HepG2 (cell line): ENCODE measurements at regions of chr14 and their contacts with region 1.

Region 1: DNA sequence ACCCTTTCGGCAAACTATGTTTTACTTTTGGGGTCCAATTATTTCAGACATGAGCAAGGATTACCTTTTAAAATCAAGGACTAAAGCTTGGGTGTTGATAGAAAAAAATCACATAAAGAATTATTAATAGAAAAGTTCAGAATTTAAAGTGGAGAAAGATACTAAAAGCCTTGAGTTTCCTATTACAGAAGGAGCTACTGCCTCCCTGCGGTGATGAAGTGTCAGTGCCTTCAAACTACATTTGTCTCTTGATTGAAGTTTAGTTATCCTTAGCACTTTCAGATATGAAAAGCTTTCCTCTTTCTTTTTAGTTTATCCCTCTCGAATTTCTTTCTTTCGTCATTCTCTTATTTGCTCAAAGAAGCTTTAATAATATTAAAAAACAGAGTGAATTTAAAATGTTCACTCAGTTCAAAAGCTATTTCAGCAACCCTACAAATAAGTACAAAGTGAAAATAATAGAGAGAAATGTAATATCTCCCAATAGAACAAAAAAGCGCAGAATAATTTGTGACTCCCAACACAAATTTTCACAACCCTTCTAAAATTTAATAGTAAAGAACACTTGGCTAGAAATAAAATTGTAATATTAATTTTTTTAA is 87.6 kb downstream of the SEC23A start:
- DNase-seq: peak; percentile 84
- ATAC-seq: peak; percentile 41; the same call in 2 of the 3 replicates
- H3K4me3 ChIP-seq: no peak overlapping the region
- H3K27ac ChIP-seq: no peak overlapping the region
- H3K4me1 ChIP-seq: peaks cover 34% of the 10 kb centered on the region
- H3K27me3 ChIP-seq: no peaks in the 10 kb centered on the region
- CTCF ChIP-seq: peak; percentile 88
- EP300 ChIP-seq: no peak
- POLR2A ChIP-seq: no peak
- RAD21 ChIP-seq: peak; percentile 81

Region 2: GRCh38 chr14:37903343-37904191 is 1111.9 kb before region 1 on chr14:
- CTCF ChIA-PET with region 1: no interaction called
- POLR2A ChIA-PET with region 1: no interaction called
- in situ Hi-C with region 1: loop called (anchors 25 kb)
- intact Hi-C with region 1: loop called (anchors 5 kb)
- DNase-seq: peak; percentile 75
- ATAC-seq: peak; percentile 90
- H3K4me3 ChIP-seq: peak overlapping the region in 2 of 3 experiments; percentile 1 to 29; a peak in 2 of 6 replicates
- H3K27ac ChIP-seq: no peak overlapping the region
- H3K4me1 ChIP-seq: peaks cover 8% of the 10 kb centered on the region
- H3K27me3 ChIP-seq: no peaks in the 10 kb centered on the region
- CTCF ChIP-seq: peak; percentile 79
- EP300 ChIP-seq: no peak
- POLR2A ChIP-seq: no peak
- RAD21 ChIP-seq: peak; percentile 69

Region 3: DNA sequence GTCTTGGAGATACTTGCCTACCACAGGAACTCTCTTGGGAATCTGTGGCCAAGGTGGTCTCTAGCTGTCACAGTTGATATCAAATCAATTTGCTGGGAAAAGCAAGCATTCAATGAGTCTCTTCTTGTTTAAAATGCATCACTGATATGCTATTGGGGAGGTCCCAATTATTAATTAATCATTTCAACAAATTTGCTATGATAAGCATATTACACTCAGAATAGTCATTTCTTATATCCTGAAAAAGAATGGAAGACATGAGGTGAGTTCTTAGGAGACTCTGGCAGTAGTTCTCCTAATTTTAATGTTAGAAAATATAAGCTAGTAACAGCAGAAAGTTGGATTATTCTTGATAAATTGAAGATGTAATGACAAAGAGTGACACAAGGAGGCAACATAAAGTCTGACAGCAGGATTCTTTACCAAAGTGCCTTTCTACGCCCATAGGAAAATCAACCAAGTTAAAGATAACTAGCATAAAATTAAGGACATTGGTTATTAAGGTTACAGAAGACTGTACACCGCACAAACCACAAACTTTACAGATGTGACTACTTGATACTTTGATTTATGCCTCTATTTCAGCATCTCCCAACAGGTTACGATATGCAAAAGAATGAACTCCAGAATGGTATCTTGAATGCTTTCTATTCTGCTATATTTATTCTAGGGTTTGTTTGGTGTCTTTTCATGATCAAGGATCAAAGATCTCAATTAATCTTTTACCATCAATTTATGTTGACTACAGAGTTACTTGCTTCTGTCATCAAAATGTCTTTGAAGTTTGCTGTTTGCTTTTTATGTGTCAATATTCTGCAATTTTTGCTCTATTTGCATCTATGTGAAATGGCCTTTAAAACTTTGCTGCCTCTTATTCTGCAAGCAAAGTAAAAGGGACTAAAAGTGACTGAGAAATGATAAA is 410.0 kb before region 1 on chr14:
- CTCF ChIA-PET with region 1: no interaction called
- POLR2A ChIA-PET with region 1: no interaction called
- in situ Hi-C with region 1: no loop called
- intact Hi-C with region 1: loop called (anchors 1 kb)
- DNase-seq: peak; percentile 79
- ATAC-seq: peak; percentile 83
- H3K4me3 ChIP-seq: peak overlapping the region in 2 of 3 experiments; percentile 1 to 11; a peak in 2 of 6 replicates
- H3K27ac ChIP-seq: peak overlapping the region; percentile 14
- H3K4me1 ChIP-seq: peaks cover 24% of the 10 kb centered on the region
- H3K27me3 ChIP-seq: no peaks in the 10 kb centered on the region
- CTCF ChIP-seq: peak; percentile 56
- EP300 ChIP-seq: peak in 1 of 2 experiments; percentile 92; a peak in 2 of 4 replicates
- POLR2A ChIP-seq: no peak
- RAD21 ChIP-seq: peak; percentile 10; the same call in 1 of the 2 replicates

Region 4: GRCh38 chr14:38941485-38941884 is 74.0 kb before region 1 on chr14:
- CTCF ChIA-PET with region 1: interaction called, 13 read pairs
- POLR2A ChIA-PET with region 1: no interaction called
- in situ Hi-C with region 1: no loop called
- intact Hi-C with region 1: loop called (anchors 1 kb)
- DNase-seq: peak; percentile 38
- ATAC-seq: peak; percentile 79
- H3K4me3 ChIP-seq: no peak overlapping the region
- H3K27ac ChIP-seq: no peak overlapping the region
- H3K4me1 ChIP-seq: no peaks in the 10 kb centered on the region
- H3K27me3 ChIP-seq: no peaks in the 10 kb centered on the region
- CTCF ChIP-seq: peak; percentile 20; the same call in 1 of the 2 replicates
- EP300 ChIP-seq: no peak
- POLR2A ChIP-seq: no peak
- RAD21 ChIP-seq: no peak

Region 5: GRCh38 chr14:39034481-39035296 is 19.2 kb after region 1 on chr14:
- CTCF ChIA-PET with region 1: interaction called, 21 read pairs
- POLR2A ChIA-PET with region 1: interaction called, 23 read pairs
- in situ Hi-C with region 1: no loop called
- intact Hi-C with region 1: loop called (anchors 1 kb)
- DNase-seq: peak; percentile 66
- ATAC-seq: peak; percentile 78
- H3K4me3 ChIP-seq: no peak overlapping the region
- H3K27ac ChIP-seq: no peak overlapping the region
- H3K4me1 ChIP-seq: no peaks in the 10 kb centered on the region
- H3K27me3 ChIP-seq: no peaks in the 10 kb centered on the region
- CTCF ChIP-seq: peak; percentile 75
- EP300 ChIP-seq: no peak
- POLR2A ChIP-seq: no peak
- RAD21 ChIP-seq: peak; percentile 66; the same call in 1 of the 2 replicates

Region 6: GRCh38 chr14:39085933-39086332 is 70.5 kb after region 1 on chr14:
- CTCF ChIA-PET with region 1: no interaction called
- POLR2A ChIA-PET with region 1: no interaction called
- in situ Hi-C with region 1: no loop called
- intact Hi-C with region 1: no loop called
- DNase-seq: no peak
- ATAC-seq: no peak
- H3K4me3 ChIP-seq: no peak overlapping the region
- H3K27ac ChIP-seq: no peak overlapping the region
- H3K4me1 ChIP-seq: no peaks in the 10 kb centered on the region
- H3K27me3 ChIP-seq: no peaks in the 10 kb centered on the region
- CTCF ChIP-seq: no peak
- EP300 ChIP-seq: no peak
- POLR2A ChIP-seq: no peak
- RAD21 ChIP-seq: no peak